Activated CD4-positive, alpha-beta memory T cell treated with anti-CD3 and anti-CD28 coated beads for 36 hours (primary cell): ENCODE measurements at regions of chr2 and their contacts with region 1.

Region 1: GRCh38 chr2:211035548-211036185 is 479.3 kb downstream of the CPS1 start:
- DNase-seq: no peak
- H3K4me3 Mint-ChIP-seq: no peak overlapping the region
- H3K27ac Mint-ChIP-seq: no peak overlapping the region
- H3K4me1 Mint-ChIP-seq: no peaks in the 10 kb centered on the region
- H3K27me3 Mint-ChIP-seq: no peaks in the 10 kb centered on the region

Region 2: GRCh38 chr2:210617732-210618330 is 417.8 kb before region 1 on chr2:
- CTCF ChIA-PET with region 1: no interaction called
- POLR2A ChIA-PET with region 1: no interaction called
- intact Hi-C with region 1: loop called (anchors 5 kb)
- DNase-seq: no peak
- H3K4me3 Mint-ChIP-seq: no peak overlapping the region
- H3K27ac Mint-ChIP-seq: no peak overlapping the region
- H3K4me1 Mint-ChIP-seq: no peaks in the 10 kb centered on the region
- H3K27me3 Mint-ChIP-seq: no peaks in the 10 kb centered on the region